GM10248 (cell line): ENCODE measurements at regions of chr15 and their contacts with region 1.

Region 1: GRCh38 chr15:64651573-64652260 is 123.7 kb downstream of the RBPMS2 start:
- DNase-seq: peak; percentile 66
- CTCF ChIP-seq: no peak

Region 2: DNA sequence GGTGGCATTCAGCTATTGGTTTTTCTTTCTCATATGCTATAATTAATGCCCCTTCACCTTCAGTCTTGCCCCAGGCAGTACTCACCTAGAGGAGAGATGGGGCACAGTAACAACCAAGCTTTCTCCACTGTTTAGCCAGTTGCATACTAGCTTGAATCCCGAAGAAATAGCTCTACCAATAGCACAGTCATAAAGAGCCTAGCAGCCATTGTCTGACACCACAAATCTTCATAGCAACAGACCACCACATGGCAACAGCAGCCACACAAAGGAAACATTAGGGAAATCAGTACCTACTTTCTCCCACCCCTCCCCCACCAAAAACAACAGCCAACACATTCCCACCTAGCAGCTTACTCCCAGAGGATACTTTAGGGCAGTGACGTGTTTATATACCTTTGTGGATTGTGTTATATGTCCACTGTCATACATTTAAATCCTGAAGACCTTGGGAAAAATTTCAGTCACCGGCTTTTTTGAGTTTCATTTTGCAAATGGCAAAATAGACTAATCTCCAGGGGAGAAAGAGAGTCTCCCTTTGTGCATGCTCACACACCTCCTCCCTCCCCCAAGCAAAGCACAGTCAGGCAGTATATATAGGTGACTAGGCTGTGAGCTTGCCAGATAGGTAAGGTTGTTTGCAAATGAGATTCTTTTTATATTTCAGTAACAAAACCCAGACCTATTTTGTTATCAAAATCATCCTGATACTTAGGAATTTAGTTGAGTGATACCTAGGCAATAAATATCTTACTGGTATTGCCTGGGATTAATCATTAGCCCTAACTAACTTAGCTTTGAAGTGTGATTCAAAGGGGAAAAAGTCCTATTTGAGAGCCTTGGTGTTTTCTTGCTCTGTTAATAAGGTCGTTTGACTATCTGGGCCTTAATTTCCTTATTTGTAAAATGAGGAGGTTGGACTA is 16.9 kb before region 1 on chr15:
- CTCF ChIA-PET with region 1: interaction called, 32 read pairs
- POLR2A ChIA-PET with region 1: interaction called, 4 read pairs
- DNase-seq: peak; percentile 25
- CTCF ChIP-seq: no peak

Region 3: DNA sequence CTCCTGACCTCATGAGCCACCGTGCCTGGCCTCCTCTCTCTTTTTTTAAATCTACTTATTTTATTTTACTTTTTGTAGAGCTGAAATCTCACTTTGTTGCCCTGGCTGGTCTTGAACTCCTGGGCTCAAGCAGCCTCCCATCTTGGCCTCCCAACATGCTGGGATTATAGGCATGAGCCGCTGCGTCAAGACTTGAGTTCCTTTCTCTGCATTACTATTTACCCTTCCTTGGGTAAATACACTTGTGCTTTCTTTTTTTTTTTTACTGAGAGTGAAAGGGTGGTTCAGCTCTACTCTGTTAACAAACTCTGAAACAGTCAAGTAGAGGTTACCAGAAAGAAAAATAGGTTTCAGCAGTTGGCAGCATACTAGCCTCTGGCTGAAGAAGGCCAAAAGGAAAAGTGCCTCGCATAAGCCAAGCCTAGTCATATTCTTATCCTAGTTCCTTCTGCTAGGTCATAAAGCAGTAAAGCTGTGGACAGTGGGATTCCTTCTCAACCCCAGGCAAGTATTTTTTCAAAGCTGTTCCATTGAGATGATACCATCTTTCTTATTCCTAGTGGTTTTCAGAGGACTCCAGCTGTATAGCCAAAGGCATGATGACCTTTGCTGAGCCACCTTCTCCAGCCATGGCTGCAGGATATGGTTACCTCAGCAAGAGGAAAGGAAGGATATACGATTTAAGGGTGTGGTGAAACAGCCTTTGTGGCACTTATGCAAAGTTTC is 11.4 kb before region 1 on chr15:
- CTCF ChIA-PET with region 1: interaction called, 32 read pairs
- POLR2A ChIA-PET with region 1: interaction called, 4 read pairs
- DNase-seq: no peak
- CTCF ChIP-seq: no peak

Region 4: DNA sequence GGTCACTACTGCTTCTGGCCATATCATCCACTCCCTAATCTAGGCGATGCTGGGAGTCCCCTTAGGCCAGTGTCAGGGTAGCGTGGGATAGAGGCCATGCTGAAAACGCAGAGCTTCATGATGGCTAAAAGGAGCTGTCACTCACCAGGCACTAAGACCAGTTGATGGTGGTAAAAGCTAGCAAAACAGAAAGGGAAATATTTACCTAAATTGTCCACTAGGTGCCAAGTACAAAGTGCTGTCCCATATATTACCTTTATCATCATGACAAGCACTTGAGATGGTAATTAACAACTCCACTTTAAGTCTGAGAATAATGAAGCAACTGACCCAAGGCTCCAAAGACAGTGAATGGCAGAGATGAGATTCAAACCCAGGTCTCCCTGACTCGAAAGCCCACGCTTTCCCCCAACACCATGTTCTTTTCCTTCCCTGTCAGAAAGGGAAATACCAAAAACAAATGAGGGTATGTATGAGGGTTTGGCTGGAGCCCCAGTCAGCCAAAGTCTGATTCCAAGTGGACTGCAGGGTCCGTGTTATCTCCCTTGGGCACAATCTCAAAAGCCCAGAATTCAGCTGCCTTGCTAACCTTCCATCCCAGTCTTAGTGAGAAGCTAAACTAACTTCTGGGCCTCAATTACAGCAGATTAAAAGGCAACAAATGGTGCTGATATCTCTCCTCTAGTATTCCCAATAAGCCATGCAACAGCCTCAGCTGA is 39.0 kb after region 1 on chr15:
- CTCF ChIA-PET with region 1: no interaction called
- POLR2A ChIA-PET with region 1: no interaction called
- DNase-seq: no peak
- CTCF ChIP-seq: no peak

Region 5: DNA sequence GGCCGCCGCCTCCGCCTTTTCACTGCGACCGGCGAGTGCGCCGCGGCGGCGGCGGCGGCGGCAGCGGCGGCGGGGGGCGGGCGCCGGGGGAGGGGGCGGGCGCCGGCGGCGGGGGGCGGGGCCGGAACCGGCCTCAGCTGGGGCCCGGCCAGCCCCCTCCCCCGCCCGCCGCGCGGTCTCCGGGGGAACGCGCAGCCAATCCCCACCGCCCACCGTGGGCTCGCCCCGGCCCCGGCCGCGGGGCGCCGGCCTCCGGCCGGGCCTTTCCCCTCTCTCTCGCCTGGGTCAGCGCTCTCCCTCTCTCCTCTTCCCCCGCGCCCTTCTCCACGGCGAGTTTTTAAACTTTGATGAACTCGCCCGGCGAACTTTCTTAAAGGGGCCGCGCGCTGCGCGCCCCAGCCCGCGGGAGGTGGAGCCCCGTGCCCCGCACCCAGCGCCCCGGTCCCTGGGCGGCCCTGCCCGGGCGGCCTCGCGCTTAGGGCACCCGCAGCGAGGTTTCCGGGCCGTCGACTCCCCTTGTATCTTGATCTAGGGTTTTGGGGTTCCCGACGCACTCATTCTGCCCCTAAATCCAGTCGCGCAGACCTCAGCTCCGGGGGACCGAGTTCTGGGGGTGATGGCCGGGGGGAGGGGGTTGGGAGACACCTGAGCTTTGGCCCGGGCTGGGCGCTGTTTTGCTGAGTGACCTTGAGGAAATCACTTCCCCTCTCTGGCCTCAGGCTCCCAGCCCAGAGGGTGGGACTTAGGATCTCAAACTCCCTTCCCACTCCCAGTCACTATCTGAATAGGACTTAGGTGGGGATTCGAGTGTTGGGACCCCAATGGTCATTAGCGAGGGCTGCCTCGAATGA is 124.1 kb after region 1 on chr15 and contains the start of gene RBPMS2:
- CTCF ChIA-PET with region 1: no interaction called
- POLR2A ChIA-PET with region 1: no interaction called
- DNase-seq: peak; percentile 68
- CTCF ChIP-seq: no peak